ENCODE measurements at regions of chr16 and their contacts with region 1.

Region 1: GRCh38 chr16:68022704-68023522 is at the starts of genes DDX28 and DUS2:
- DNase-seq: peak; percentile 91 to 96 (median 94)
- ATAC-seq: peak; percentile 87 to 99 (median 98)
- H3K4me3 ChIP-seq: peak within 1 kb of the TSS; percentile 59 to 98 (median 92)
- H3K27ac ChIP-seq: peak within 1 kb of the TSS; percentile 37 to 95 (median 88)
- H3K4me1 ChIP-seq: peaks cover 3 to 30% (median 21%) of the 10 kb centered on the region in 12 donors
- H3K27me3 ChIP-seq: no peaks in the 10 kb centered on the region
- CTCF ChIP-seq: peak in 1 of 12 donors; percentile 4
- POLR2A ChIP-seq: peak in 1 of 2 donors; percentile 58
- total RNA-seq, gene DDX28: 4.4 to 11.9 (median 8.8) TPM
- total RNA-seq, gene DUS2: 3.8 to 11.5 (median 7.2) TPM

Region 2: GRCh38 chr16:67236563-67237395 is 786.1 kb before region 1 on chr16:
- intact Hi-C with region 1: loop called in 1 of 10 experiments (anchors 10 kb)
- DNase-seq: peak in 2 of 5 donors; percentile 52 to 68
- ATAC-seq: peak in 2 of 4 donors; percentile 14 to 33
- H3K4me3 ChIP-seq: no peak overlapping the region
- H3K27ac ChIP-seq: no peak overlapping the region
- H3K4me1 ChIP-seq: peaks cover 10 to 22% (median 18%) of the 10 kb centered on the region in 12 donors
- H3K27me3 ChIP-seq: no peaks in the 10 kb centered on the region
- CTCF ChIP-seq: no peak
- POLR2A ChIP-seq: no peak

Region 3: GRCh38 chr16:67942200-67942509 is 80.8 kb before region 1 on chr16:
- intact Hi-C with region 1: loop called in 1 of 10 experiments (anchors 5 kb)
- DNase-seq: no peak
- ATAC-seq: peak in 3 of 4 donors; percentile 14 to 22 (median 18)
- H3K4me3 ChIP-seq: no peak overlapping the region
- H3K27ac ChIP-seq: peak overlapping the region in 7 of 12 donors; percentile 4 to 54 (median 25)
- H3K4me1 ChIP-seq: peaks cover 4 to 67% (median 38%) of the 10 kb centered on the region in 12 donors
- H3K27me3 ChIP-seq: no peaks in the 10 kb centered on the region
- CTCF ChIP-seq: peak; percentile 35 to 70 (median 54)
- POLR2A ChIP-seq: no peak

Region 4: GRCh38 chr16:68244903-68245853 is 222.3 kb after region 1 on chr16 and contains the start of gene PLA2G15:
- intact Hi-C with region 1: no loop called
- DNase-seq: peak; percentile 98 to 99 (median 98)
- ATAC-seq: peak; percentile 91 to 97 (median 96)
- H3K4me3 ChIP-seq: peak within 1 kb of the TSS; percentile 65 to 98 (median 86)
- H3K27ac ChIP-seq: peak within 1 kb of the TSS in 11 of 12 donors; percentile 75 to 97 (median 87)
- H3K4me1 ChIP-seq: peaks cover 4 to 55% (median 47%) of the 10 kb centered on the region in 12 donors
- H3K27me3 ChIP-seq: no peaks in the 10 kb centered on the region
- CTCF ChIP-seq: peak in 1 of 12 donors; percentile 17
- POLR2A ChIP-seq: peak; percentile 78 to 94
- total RNA-seq, gene PLA2G15: 27.3 to 68.0 (median 45.4) TPM

Measured in heart left ventricle (tissue), 16 donors.